Left lung (tissue), 14 donors: ENCODE measurements at regions of chr1 and their contacts with region 1.

Region 1: DNA sequence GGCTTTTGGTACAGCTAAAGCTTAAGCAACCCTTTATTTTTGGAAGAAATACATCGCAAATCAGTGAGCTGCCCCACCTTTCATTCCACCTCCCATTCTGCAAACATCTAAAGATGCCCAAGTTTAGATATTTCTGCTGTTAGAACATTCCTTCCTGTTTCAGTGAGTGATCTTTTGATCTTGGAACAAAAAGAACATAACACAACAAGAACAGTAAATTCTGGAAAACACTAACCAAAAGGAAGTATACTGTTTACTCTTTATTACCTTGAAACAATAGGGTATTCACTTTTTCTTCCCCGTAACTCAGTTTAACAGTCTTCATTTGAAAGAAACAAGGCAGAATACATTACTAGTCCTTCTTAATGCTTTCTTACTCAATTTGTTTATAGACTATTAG is 40.6 kb downstream of the HNRNPR start:
- DNase-seq: no peak
- ATAC-seq: no peak
- H3K4me3 ChIP-seq: no peak overlapping the region
- H3K27ac ChIP-seq: peak overlapping the region; percentile 2 to 34
- H3K4me1 ChIP-seq: peaks cover 0 to 6% of the 10 kb centered on the region in 2 donors
- H3K27me3 ChIP-seq: no peaks in the 10 kb centered on the region
- CTCF ChIP-seq: no peak

Region 2: GRCh38 chr1:23403735-23404486 is 100.4 kb after region 1 on chr1:
- intact Hi-C with region 1: loop called in 1 of 2 experiments (anchors 10 kb)
- DNase-seq: peak; percentile 70 to 93 (median 88)
- ATAC-seq: peak; percentile 96
- H3K4me3 ChIP-seq: no peak overlapping the region
- H3K27ac ChIP-seq: peak overlapping the region; percentile 49 to 58
- H3K4me1 ChIP-seq: peaks cover 17 to 34% of the 10 kb centered on the region in 2 donors
- H3K27me3 ChIP-seq: no peaks in the 10 kb centered on the region
- CTCF ChIP-seq: peak; percentile 93